ENCODE measurements at regions of chr11 and their contacts with region 1.

Region 1: DNA sequence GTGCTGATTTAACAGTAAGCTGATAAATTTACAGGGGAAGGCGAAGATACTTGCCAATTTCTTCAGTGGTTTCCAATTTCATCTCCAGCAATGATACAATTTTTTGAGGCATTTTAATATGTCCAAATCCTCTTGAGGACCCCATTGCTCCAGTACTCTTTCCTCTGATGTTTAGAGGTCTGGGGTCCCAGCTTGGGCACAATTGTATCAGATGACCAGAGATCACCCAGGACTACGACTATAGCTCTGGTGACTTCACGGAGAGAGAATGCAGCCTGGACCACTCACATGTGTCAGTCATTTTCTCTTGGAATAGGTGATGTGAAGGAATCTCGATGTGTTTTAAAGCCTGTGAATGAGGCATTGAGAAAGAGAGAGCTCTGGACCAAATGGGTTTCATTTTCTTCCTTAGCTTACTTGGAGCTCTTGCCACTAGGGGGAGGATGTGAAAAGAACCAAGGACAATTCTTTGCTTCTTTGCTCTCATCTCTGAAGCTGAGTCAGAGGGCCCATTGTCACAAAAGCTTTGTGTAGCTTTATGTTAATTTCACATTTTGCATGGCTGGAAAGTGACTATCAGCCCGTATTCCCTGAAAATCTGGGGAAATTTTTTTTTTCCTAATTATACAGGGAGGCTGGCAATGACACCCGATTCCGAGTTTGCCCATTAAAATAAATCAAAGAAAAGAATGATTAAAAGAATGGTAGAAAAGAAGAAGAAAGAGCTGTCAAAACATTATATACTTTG is 6.7 kb upstream of the CCDC90B start:
- DNase-seq: no peak
- H3K4me3 ChIP-seq: no peak overlapping the region
- H3K27me3 ChIP-seq: no peaks in the 10 kb centered on the region
- CTCF ChIP-seq: peak; percentile 76

Region 2: DNA sequence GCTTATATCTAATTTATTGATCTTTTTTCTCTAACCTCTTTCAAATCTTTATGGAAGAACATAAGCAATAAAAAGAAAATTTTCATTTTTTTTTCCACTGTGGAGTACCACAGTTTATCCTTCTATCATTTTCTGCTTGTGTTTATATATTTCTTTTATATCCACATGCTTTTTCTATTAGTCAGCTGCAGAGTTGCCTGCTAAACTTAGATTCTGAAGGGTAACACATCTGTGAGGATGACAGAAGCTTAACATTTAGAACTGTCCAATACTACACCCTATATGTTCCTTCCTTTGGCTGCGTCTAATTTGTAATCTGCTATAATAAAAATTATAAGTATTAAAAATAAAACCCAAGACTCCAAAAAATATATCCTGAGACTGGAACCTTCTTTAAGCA is 27.6 kb before region 1 on chr11:
- CTCF ChIA-PET with region 1: no interaction called
- POLR2A ChIA-PET with region 1: no interaction called
- DNase-seq: no peak
- H3K4me3 ChIP-seq: no peak overlapping the region
- H3K27me3 ChIP-seq: no peaks in the 10 kb centered on the region
- CTCF ChIP-seq: no peak

Region 3: DNA sequence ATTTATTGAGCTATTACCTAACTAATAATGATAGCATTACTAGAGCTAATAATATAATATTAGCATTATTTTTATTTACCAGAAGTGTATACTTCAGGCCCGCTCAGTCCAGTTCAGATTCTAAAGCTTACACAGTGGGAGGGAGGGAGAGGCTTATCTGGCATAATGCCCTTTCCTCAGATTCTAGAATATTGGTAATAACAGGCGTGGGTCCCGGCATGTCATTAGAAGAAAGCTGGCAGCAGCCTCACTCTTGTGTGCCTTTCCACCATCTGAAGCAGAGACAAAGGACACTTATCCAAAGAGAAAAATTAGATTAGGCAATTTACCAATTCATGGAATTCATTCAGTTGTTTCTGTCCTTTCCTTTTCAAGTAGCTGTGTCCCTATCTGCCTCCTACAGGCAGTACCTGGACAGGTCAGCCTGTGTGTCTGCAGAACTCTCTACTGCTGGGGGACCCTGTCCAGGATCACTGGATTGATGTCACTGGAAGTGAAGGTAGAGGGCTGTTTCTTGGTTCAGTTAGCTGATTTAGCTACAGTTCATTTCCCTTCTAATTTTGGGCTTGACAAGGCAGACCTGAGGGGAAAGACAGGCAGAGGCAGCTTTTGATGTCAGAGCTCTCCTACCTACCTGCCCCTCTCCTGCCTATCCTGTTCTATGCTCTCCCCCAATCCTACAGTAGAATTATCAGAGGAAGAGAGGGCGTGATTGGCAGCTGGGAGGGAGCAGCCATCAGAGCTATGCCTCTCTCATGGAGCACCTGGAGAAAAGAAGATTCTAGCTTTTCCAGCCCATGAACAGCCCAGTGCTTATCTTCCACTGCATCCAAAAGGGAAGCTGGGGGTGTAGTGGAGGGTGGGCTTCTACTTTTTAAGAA is 13.6 kb after region 1 on chr11:
- CTCF ChIA-PET with region 1: interaction called, 16 read pairs
- POLR2A ChIA-PET with region 1: no interaction called
- DNase-seq: no peak
- H3K4me3 ChIP-seq: no peak overlapping the region
- H3K27me3 ChIP-seq: no peaks in the 10 kb centered on the region; the same call in none of the 2 replicates
- CTCF ChIP-seq: no peak

Region 4: GRCh38 chr11:83724008-83724461 is 431.2 kb after region 1 on chr11:
- CTCF ChIA-PET with region 1: interaction called, 27 read pairs
- POLR2A ChIA-PET with region 1: no interaction called
- DNase-seq: no peak
- H3K4me3 ChIP-seq: peak overlapping the region; percentile 3; the same call in 1 of the 2 replicates
- H3K27me3 ChIP-seq: peaks cover 5% of the 10 kb centered on the region
- CTCF ChIP-seq: peak; percentile 51

Region 5: DNA sequence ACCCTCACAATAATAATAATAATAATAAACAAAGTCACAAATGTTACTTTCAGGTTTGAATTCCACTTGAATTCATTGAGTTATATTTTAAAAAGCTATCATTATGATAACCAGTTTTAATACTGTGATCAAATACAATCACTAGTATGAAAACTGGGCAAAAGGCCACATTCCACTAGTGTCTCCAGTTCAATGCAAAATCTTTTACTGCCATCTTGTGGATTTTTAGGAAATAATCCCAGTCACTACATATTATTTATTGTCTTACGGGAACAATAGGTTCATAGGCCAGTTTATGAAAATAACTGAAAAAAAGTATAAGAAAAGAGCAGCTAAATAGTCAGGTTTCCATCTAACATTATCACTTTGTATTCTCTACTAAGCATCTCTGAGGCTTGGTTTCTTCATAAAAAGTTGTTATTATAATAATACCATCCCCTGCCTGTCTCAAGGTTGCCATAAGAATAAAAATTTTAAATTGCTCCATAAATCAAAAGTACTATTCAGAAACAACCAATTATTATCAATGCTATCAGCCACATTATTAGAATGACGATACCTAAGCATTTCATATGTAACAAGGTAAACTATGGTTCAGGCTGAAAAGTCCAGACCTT is 527.2 kb after region 1 on chr11:
- CTCF ChIA-PET with region 1: interaction called, 25 read pairs
- POLR2A ChIA-PET with region 1: no interaction called
- DNase-seq: peak; percentile 18
- H3K4me3 ChIP-seq: no peak overlapping the region
- H3K27me3 ChIP-seq: no peaks in the 10 kb centered on the region
- CTCF ChIP-seq: peak; percentile 59